Body of pancreas (tissue), 4 donors: ENCODE measurements at regions of chr4 and their contacts with region 1.

Region 1: GRCh38 chr4:145058256-145058655 is 39.7 kb downstream of the ANAPC10 start:
- DNase-seq: no peak
- ATAC-seq: no peak
- H3K4me3 ChIP-seq: no peak overlapping the region
- H3K27ac ChIP-seq: no peak overlapping the region
- H3K4me1 ChIP-seq: no peaks in the 10 kb centered on the region
- H3K27me3 ChIP-seq: no peaks in the 10 kb centered on the region
- CTCF ChIP-seq: no peak
- POLR2A ChIP-seq: no peak

Region 2: GRCh38 chr4:144174401-144175067 is 883.7 kb before region 1 on chr4:
- intact Hi-C with region 1: loop called (anchors 10 kb)
- DNase-seq: peak in 2 of 4 donors; percentile 13 to 17
- ATAC-seq: peak; percentile 64
- H3K4me3 ChIP-seq: no peak overlapping the region
- H3K27ac ChIP-seq: no peak overlapping the region
- H3K4me1 ChIP-seq: no peaks in the 10 kb centered on the region
- H3K27me3 ChIP-seq: no peaks in the 10 kb centered on the region
- CTCF ChIP-seq: peak in 6 of 7 experiments; percentile 42 to 60 (median 46)
- POLR2A ChIP-seq: no peak

Region 3: DNA sequence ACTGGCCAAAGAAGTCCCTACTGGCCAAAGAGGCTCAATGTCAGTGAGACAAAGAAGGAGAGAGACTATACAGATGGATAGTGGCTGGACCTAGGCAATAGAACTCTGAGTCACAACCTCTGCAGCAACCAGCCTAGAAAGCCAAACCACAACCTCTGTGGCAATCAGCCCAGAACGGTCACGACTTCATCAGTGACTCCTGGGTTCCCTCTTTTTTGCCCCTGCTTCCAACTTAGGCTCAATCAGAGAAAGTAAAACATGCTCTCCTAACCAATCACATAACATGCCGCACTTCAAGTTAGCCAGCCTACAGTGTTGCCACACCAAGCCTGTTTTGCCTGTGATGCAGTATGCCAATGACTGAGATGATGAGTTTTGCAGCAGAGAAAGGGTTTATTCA is 163.7 kb before region 1 on chr4:
- intact Hi-C with region 1: no loop called
- DNase-seq: peak in 3 of 4 donors; percentile 14 to 44 (median 18)
- ATAC-seq: no peak
- H3K4me3 ChIP-seq: no peak overlapping the region
- H3K27ac ChIP-seq: no peak overlapping the region
- H3K4me1 ChIP-seq: no peaks in the 10 kb centered on the region
- H3K27me3 ChIP-seq: no peaks in the 10 kb centered on the region
- CTCF ChIP-seq: no peak
- POLR2A ChIP-seq: no peak